ENCODE measurements at regions of chr5 and their contacts with region 1.

Region 1: DNA sequence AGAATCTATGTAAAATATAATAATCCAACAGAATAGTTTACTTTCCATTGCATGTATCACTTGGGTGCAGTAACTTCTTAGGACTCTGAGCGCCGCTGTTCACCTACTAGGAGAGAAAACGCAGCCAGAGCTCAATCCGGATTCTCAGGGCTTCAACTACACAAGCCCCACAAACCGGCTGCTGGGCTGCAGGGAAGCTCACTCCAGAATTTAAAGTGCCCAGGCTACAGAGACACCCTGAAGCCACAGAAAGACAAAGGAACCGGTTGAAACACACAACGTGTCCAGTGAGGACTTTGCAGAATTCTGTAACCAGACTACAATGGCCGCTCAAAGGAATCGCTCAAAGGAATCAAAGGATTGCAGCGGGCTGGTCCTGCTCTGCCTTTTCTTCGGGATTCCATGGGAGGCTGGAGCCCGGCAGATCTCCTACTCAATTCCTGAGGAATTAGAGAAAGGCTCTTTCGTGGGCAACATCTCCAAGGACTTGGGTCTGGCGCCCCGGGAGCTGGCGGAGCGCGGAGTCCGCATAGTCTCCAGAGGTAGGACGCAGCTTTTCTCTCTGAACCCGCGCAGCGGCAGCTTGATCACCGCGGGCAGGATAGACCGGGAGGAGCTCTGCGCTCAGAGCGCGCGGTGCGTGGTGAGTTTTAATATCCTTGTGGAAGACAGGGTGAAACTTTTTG is at the start of gene PCDHGA10:
- DNase-seq: peak in 1 of 2 experiments; percentile 50
- H3K4me3 ChIP-seq: peak within 1 kb of the TSS; percentile 49
- H3K4me3 Mint-ChIP-seq: peak within 1 kb of the TSS; percentile 86
- H3K27ac Mint-ChIP-seq: no peak within 1 kb of the TSS
- H3K4me1 ChIP-seq: no peaks in the 10 kb centered on the region
- H3K4me1 Mint-ChIP-seq: no peaks in the 10 kb centered on the region
- H3K27me3 ChIP-seq: no peaks in the 10 kb centered on the region
- H3K27me3 Mint-ChIP-seq: no peaks in the 10 kb centered on the region
- CTCF ChIP-seq: peak; percentile 50 to 55
- total RNA-seq, gene PCDHGA10: 2.9 and 3.6 TPM in 2 replicates

Region 2: GRCh38 chr5:141320225-141321169 is 92.5 kb before region 1 on chr5 and contains the start of gene TAF7:
- CTCF ChIA-PET with region 1: interaction called, 4 read pairs
- POLR2A ChIA-PET with region 1: interaction called, 4 read pairs
- intact Hi-C with region 1: loop called (anchors 5 kb)
- DNase-seq: peak; percentile 94 to 95
- H3K4me3 ChIP-seq: peak within 1 kb of the TSS; percentile 95
- H3K4me3 Mint-ChIP-seq: peak within 1 kb of the TSS; percentile 96
- H3K27ac Mint-ChIP-seq: peak within 1 kb of the TSS; percentile 100
- H3K4me1 ChIP-seq: peaks cover 5% of the 10 kb centered on the region; the same call in 1 of the 2 replicates
- H3K4me1 Mint-ChIP-seq: peaks cover 6% of the 10 kb centered on the region
- H3K27me3 ChIP-seq: no peaks in the 10 kb centered on the region
- H3K27me3 Mint-ChIP-seq: no peaks in the 10 kb centered on the region
- CTCF ChIP-seq: peak; percentile 87 to 93
- total RNA-seq, gene TAF7: 77.2 and 78.7 TPM in 2 replicates